Naive thymus-derived CD4-positive, alpha-beta T cell (primary cell): ENCODE measurements at regions of chr12 and their contacts with region 1.

Region 1: DNA sequence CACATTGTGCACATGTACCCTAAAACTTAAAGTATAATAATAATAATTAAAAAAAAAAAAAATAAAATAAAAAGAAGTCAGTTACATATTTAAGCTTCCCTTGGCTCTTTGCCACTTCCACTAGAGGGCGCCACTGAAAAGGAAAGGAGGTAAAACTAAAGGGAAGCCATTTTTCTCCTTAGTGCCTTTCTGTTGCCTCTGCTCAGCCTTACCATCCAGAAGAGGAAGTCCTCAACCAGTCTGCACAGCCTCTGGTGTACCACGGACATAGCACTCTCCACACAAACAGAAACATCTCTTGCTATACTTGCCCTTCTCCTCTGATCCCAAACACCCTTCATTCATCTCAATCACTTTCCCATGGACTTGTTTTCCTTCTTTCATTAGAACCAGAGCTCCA is 169.0 kb upstream of the EEA1 start:
- DNase-seq: peak; percentile 33 to 75 (median 62)
- ATAC-seq: peak; percentile 96
- H3K4me3 ChIP-seq: no peak overlapping the region
- H3K4me3 Mint-ChIP-seq: no peak overlapping the region
- H3K27ac ChIP-seq: no peak overlapping the region
- H3K27ac Mint-ChIP-seq: peak overlapping the region in 1 of 9 donors; percentile 2
- H3K4me1 ChIP-seq: no peaks in the 10 kb centered on the region
- H3K4me1 Mint-ChIP-seq: peaks cover 4 to 9% (median 5%) of the 10 kb centered on the region in 7 donors
- H3K27me3 ChIP-seq: no peaks in the 10 kb centered on the region
- H3K27me3 Mint-ChIP-seq: no peaks in the 10 kb centered on the region

Region 2: GRCh38 chr12:92827836-92828431 is 270.1 kb before region 1 on chr12:
- CTCF ChIA-PET with region 1: no interaction called
- POLR2A ChIA-PET with region 1: no interaction called
- intact Hi-C with region 1: loop called in 1 of 2 experiments (anchors 1 kb)
- DNase-seq: peak in 7 of 9 donors; percentile 19 to 58 (median 37)
- ATAC-seq: peak; percentile 74
- H3K4me3 ChIP-seq: no peak overlapping the region
- H3K4me3 Mint-ChIP-seq: no peak overlapping the region
- H3K27ac ChIP-seq: no peak overlapping the region
- H3K27ac Mint-ChIP-seq: no peak overlapping the region
- H3K4me1 ChIP-seq: no peaks in the 10 kb centered on the region
- H3K4me1 Mint-ChIP-seq: peaks cover 0 to 8% (median 2%) of the 10 kb centered on the region in 7 donors
- H3K27me3 ChIP-seq: no peaks in the 10 kb centered on the region
- H3K27me3 Mint-ChIP-seq: no peaks in the 10 kb centered on the region

Region 3: GRCh38 chr12:93109551-93110203 is 11.6 kb after region 1 on chr12:
- CTCF ChIA-PET with region 1: interaction called, 10 read pairs
- POLR2A ChIA-PET with region 1: no interaction called
- intact Hi-C with region 1: no loop called
- DNase-seq: peak in 1 of 9 donors; percentile 24
- ATAC-seq: no peak
- H3K4me3 ChIP-seq: no peak overlapping the region
- H3K4me3 Mint-ChIP-seq: no peak overlapping the region
- H3K27ac ChIP-seq: no peak overlapping the region
- H3K27ac Mint-ChIP-seq: no peak overlapping the region
- H3K4me1 ChIP-seq: no peaks in the 10 kb centered on the region
- H3K4me1 Mint-ChIP-seq: no peaks in the 10 kb centered on the region
- H3K27me3 ChIP-seq: no peaks in the 10 kb centered on the region
- H3K27me3 Mint-ChIP-seq: no peaks in the 10 kb centered on the region

Region 4: GRCh38 chr12:93397412-93397811 is 299.3 kb after region 1 on chr12:
- CTCF ChIA-PET with region 1: interaction called, 11 read pairs
- POLR2A ChIA-PET with region 1: no interaction called
- intact Hi-C with region 1: loop called (anchors 1 kb)
- DNase-seq: no peak
- ATAC-seq: no peak
- H3K4me3 ChIP-seq: no peak overlapping the region
- H3K4me3 Mint-ChIP-seq: no peak overlapping the region
- H3K27ac ChIP-seq: no peak overlapping the region
- H3K27ac Mint-ChIP-seq: peak overlapping the region in 1 of 9 donors; percentile 25
- H3K4me1 ChIP-seq: no peaks in the 10 kb centered on the region
- H3K4me1 Mint-ChIP-seq: peaks cover 0 to 8% (median 5%) of the 10 kb centered on the region in 7 donors
- H3K27me3 ChIP-seq: no peaks in the 10 kb centered on the region
- H3K27me3 Mint-ChIP-seq: no peaks in the 10 kb centered on the region

Region 5: GRCh38 chr12:93467351-93468007 is 369.4 kb after region 1 on chr12 and contains the start of gene MRPL42:
- CTCF ChIA-PET with region 1: interaction called, 3 read pairs
- POLR2A ChIA-PET with region 1: no interaction called
- intact Hi-C with region 1: loop called in 1 of 2 experiments (anchors 1 kb)
- DNase-seq: peak; percentile 86 to 96 (median 94)
- ATAC-seq: peak; percentile 97
- H3K4me3 ChIP-seq: peak within 1 kb of the TSS; percentile 94
- H3K4me3 Mint-ChIP-seq: peak within 1 kb of the TSS; percentile 85 to 96 (median 93)
- H3K27ac ChIP-seq: peak within 1 kb of the TSS; percentile 85
- H3K27ac Mint-ChIP-seq: peak within 1 kb of the TSS; percentile 90 to 98 (median 95)
- H3K4me1 ChIP-seq: peaks cover 8 to 10% of the 10 kb centered on the region in 2 donors
- H3K4me1 Mint-ChIP-seq: peaks cover 28 to 48% (median 36%) of the 10 kb centered on the region in 7 donors
- H3K27me3 ChIP-seq: no peaks in the 10 kb centered on the region
- H3K27me3 Mint-ChIP-seq: no peaks in the 10 kb centered on the region
- total RNA-seq, gene MRPL42: 30.1 to 65.8 (median 45.6) TPM